Ascending aorta (tissue), 2 donors: ENCODE measurements at regions of chr12 and their contacts with region 1.

Region 1: DNA sequence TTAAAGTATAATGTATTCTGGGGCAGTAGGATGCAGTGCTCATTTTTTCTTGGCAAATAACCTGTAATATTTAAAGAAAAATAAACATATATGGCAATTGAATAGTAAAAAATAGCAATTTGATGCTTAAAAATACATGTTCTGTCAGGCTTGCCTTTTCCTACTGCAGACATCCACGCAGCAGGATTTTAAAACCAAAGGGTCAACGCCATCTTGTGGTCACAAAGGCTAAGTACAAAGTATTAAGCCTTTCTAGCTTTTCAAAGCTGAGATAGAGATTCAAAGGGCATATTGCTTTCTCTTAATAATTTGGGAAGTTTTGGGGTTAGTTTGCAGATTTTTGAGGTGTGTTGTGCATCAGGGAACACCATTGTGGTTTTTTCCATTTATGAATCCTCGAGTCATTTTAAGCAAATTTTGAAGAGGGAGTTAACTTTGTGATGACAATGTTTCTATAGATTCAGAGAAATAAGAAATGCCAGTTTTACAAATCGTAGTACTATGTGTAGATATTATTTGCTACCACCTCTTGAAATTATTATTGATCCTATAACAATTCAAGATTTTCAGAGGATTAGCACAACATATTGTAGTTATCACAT is 4.7 kb upstream of the CCER1 start:
- DNase-seq: no peak
- H3K4me3 ChIP-seq: no peak overlapping the region
- H3K27ac ChIP-seq: no peak overlapping the region
- H3K4me1 ChIP-seq: no peaks in the 10 kb centered on the region
- H3K27me3 ChIP-seq: no peaks in the 10 kb centered on the region
- CTCF ChIP-seq: peak in 2 of 3 experiments; percentile 63 to 71

Region 2: GRCh38 chr12:89542912-89543592 is 1416.6 kb before region 1 on chr12:
- intact Hi-C with region 1: loop called (anchors 10 kb)
- DNase-seq: peak in 1 of 2 donors; percentile 72
- H3K4me3 ChIP-seq: no peak overlapping the region
- H3K27ac ChIP-seq: no peak overlapping the region
- H3K4me1 ChIP-seq: peaks cover 0 to 7% of the 10 kb centered on the region in 2 donors
- H3K27me3 ChIP-seq: no peaks in the 10 kb centered on the region
- CTCF ChIP-seq: peak; percentile 48 to 83 (median 72)